Posterior vena cava (tissue), 2 donors: ENCODE measurements at regions of chr18 and their contacts with region 1.

Region 1: GRCh38 chr18:6885992-6886796 is 156.7 kb downstream of the ARHGAP28 start:
- DNase-seq: no peak

Region 2: DNA sequence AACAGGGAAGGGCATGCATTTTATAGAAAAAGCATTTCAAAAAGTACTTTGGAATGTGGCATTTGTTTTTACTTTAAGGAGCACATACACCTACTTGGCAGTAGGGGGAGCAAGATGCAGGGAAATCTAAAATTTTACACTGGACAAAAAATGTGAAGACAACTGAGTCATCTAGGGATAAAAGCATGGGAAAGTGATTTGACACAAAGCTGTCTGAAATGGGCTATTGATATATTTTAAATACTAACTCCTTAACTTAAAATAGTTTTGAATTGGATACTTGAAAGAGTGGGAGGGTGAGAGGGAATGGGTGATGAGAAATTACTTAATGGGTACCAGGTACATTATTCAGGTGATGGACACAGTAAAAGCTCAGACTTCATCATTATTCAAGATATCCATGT is 1006.7 kb before region 1 on chr18:
- intact Hi-C with region 1: loop called in 1 of 2 experiments (anchors 10 kb)
- DNase-seq: no peak

Region 3: DNA sequence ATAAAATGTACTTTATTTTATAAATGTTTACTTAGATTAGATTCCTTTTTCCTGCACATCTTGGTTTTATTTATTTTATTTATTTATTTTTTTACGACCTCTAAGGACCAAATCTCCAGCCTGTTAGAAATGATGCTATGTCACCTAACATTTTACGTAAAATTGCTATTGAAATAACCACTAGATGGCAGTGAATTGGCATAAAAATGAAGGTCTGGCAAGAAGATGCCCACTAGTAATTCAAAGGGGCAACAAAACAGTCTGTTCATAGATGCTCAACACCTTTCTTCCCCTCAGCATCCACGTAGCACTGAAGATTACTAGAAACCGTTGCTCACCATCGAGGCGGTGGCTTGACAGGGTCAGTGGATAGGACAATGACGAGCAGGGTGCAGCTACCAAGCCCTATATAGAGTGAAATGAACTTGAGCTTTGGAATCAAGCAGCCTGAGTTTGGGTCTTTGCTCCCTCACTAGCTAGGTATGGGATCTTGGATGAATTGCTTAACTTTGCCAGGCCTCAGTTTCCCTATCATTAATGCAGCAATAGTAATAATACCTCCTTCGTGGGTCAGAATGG is 342.8 kb before region 1 on chr18:
- intact Hi-C with region 1: loop called (anchors 2 to 10 kb)
- DNase-seq: no peak

Region 4: DNA sequence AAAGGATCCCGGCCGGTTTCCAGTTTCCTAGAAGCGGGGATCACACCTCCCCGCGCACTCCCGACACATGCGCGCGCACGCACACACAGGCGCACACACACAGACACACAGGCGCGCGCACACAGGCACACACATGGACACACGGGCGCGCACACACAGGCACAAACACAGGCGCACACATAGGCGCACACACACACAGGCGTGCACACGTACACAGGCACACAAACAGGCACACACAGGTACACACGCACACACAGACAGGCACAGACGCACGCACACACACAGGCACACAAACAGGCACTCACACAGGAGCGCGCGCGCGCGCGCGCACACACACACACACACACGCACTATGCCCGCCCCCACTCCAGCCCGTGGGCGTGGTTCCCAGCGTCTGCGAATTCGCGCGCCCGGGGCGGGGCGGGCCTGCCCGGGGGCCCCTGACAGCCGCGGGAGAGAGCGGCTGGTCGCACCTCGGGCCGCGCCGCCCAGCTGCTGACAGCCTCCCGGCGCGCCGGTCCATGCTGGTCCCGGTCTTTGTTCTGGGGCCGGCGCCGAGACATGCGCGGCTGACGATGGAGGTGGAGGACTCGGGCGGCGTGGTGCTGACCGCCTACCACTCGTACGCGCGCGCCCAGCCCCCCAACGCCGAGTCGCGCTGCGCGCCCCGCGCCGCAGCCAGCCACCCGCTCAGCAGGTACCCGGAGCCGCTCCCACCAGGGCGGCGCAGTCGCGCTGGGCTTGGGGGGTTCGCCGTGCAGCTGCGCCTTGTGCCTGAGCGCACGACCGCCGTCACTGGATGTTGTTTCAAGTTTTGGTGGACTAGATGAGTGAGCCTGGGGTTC is 156.7 kb before region 1 on chr18 and contains the start of gene ARHGAP28:
- intact Hi-C with region 1: loop called in 1 of 2 experiments (anchors 5 kb)
- DNase-seq: peak; percentile 89
- total RNA-seq, gene ARHGAP28: 15.6 to 26.2 TPM

Region 5: GRCh38 chr18:6741232-6741663 is 144.9 kb before region 1 on chr18:
- intact Hi-C with region 1: no loop called
- DNase-seq: no peak

Region 6: GRCh38 chr18:6835345-6835744 is 50.8 kb before region 1 on chr18:
- intact Hi-C with region 1: no loop called
- DNase-seq: no peak

Region 7: GRCh38 chr18:7084080-7085075 is 198.2 kb after region 1 on chr18:
- intact Hi-C with region 1: no loop called
- DNase-seq: no peak